Upper lobe of right lung (tissue), 1 donor: ENCODE measurements at regions of chr11 and their contacts with region 1.

Region 1: GRCh38 chr11:6377902-6378639 is 12.2 kb upstream of the SMPD1 start:
- DNase-seq: no peak
- ATAC-seq: peak; percentile 77
- H3K4me3 ChIP-seq: no peak overlapping the region
- H3K27ac ChIP-seq: no peak overlapping the region
- H3K4me1 ChIP-seq: no peaks in the 10 kb centered on the region
- H3K27me3 ChIP-seq: no peaks in the 10 kb centered on the region
- CTCF ChIP-seq: no peak

Region 2: DNA sequence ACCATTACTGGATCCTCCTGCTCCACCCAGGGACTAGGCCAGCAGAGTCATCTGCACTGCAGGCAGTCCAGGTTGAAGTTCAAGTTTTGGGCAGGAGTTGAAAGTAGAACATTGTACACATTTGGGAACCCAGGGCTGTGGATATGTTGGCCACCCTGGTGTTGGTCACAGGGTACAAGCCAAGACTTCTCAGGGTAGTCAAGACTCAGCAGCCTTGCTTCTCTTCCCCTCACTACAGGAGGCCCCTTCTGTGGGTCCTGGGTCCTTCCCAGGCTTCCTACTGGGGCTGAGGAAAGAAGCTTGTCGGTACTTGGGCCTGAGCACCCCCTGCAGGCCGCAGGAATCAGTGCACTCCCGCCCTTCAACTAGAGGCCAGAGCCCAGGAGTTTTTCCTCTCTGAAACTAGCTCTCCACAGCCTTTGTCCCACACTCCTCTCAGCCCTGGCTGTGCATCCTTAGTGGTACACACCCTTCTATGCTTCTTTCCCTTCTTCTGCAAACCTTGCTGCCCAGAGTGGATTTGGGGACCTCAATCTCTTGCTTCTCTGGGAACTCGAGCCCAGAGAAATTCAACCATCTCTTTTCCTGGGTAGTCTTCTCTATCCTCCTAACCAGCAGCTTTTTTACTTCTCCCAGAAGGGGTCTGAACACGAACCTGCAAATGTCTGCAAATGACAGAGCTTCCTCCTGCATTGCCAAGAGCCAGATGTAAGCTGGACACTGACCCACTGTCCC is 65.4 kb after region 1 on chr11:
- intact Hi-C with region 1: loop called (anchors 5 kb)
- DNase-seq: peak; percentile 78
- ATAC-seq: peak; percentile 90
- H3K4me3 ChIP-seq: no peak overlapping the region
- H3K27ac ChIP-seq: no peak overlapping the region
- H3K4me1 ChIP-seq: no peaks in the 10 kb centered on the region
- H3K27me3 ChIP-seq: no peaks in the 10 kb centered on the region
- CTCF ChIP-seq: peak; percentile 85

Region 3: GRCh38 chr11:6505577-6506240 is 127.6 kb after region 1 on chr11:
- intact Hi-C with region 1: loop called (anchors 10 kb)
- DNase-seq: no peak
- ATAC-seq: peak; percentile 78
- H3K4me3 ChIP-seq: no peak overlapping the region
- H3K27ac ChIP-seq: no peak overlapping the region
- H3K4me1 ChIP-seq: no peaks in the 10 kb centered on the region
- H3K27me3 ChIP-seq: no peaks in the 10 kb centered on the region
- CTCF ChIP-seq: peak; percentile 72